Activated CD8-positive, alpha-beta T cell treated with anti-CD3 and anti-CD28 coated beads, Interleukin-2, amount 10 ng/mL, durations not matched to agents 7 days and 5 days (primary cell): ENCODE measurements at regions of chr6 and their contacts with region 1.

Region 1: GRCh38 chr6:33547499-33547898 is 32.6 kb downstream of the BAK1 start:
- DNase-seq: no peak
- ATAC-seq: no peak
- H3K4me3 Mint-ChIP-seq: no peak overlapping the region
- H3K27ac Mint-ChIP-seq: peak overlapping the region; percentile 85
- H3K4me1 Mint-ChIP-seq: peaks cover 25% of the 10 kb centered on the region
- H3K27me3 Mint-ChIP-seq: no peaks in the 10 kb centered on the region

Region 2: GRCh38 chr6:33112148-33112547 is 435.4 kb before region 1 on chr6:
- CTCF ChIA-PET with region 1: no interaction called
- POLR2A ChIA-PET with region 1: no interaction called
- DNase-seq: peak; percentile 44
- ATAC-seq: peak; percentile 90
- H3K4me3 Mint-ChIP-seq: no peak overlapping the region
- H3K27ac Mint-ChIP-seq: no peak overlapping the region
- H3K4me1 Mint-ChIP-seq: peaks cover 10% of the 10 kb centered on the region
- H3K27me3 Mint-ChIP-seq: peaks cover 74% of the 10 kb centered on the region

Region 3: GRCh38 chr6:33535104-33535603 is 12.3 kb before region 1 on chr6:
- CTCF ChIA-PET with region 1: interaction called, 5 read pairs
- POLR2A ChIA-PET with region 1: interaction called, 17 read pairs
- DNase-seq: no peak
- ATAC-seq: no peak
- H3K4me3 Mint-ChIP-seq: no peak overlapping the region
- H3K27ac Mint-ChIP-seq: no peak overlapping the region
- H3K4me1 Mint-ChIP-seq: peaks cover 23% of the 10 kb centered on the region
- H3K27me3 Mint-ChIP-seq: peaks cover 6% of the 10 kb centered on the region

Region 4: DNA sequence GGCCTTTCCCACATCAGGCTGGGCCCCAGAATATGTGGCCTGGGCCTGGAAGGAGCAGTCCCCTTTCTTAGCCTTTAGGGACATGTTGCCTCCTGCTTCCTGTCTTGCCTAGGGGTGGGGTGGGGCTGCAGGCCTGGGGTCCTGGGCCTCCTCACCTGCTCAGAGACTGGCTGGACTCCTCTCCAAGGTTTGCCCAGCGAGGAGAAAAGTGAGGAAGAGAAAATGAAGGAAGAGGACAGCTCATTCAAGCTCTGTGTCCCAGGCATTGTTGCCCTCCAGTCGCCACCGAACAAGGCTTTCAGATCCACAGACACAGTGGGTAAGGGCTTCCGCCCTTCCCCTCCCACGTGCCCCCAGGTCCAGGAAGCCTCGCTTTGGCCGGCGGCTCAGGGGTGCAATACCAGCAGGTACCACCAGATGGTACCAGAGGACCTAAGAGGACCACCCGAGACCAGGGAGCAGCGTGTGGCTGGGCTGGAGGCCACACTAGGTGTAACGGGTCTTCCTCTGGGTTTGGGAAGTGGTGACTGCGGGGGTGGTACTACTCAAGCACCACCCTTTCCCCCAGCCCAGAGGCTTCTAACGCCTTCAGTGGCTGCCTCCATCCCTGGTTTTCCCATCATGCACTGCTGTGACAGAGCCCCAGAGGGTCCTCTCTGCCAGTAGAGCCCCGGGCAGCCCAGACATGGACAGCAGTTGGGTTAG is 38.1 kb after region 1 on chr6:
- CTCF ChIA-PET with region 1: no interaction called
- POLR2A ChIA-PET with region 1: no interaction called
- DNase-seq: peak; percentile 93
- ATAC-seq: peak; percentile 92
- H3K4me3 Mint-ChIP-seq: peak overlapping the region; percentile 78
- H3K27ac Mint-ChIP-seq: peak overlapping the region; percentile 96
- H3K4me1 Mint-ChIP-seq: peaks cover 33% of the 10 kb centered on the region
- H3K27me3 Mint-ChIP-seq: no peaks in the 10 kb centered on the region